Aorta (tissue), 5 donors: ENCODE measurements at regions of chr16 and their contacts with region 1.

Region 1: GRCh38 chr16:30571695-30572600 is at the start of gene ZNF688:
- DNase-seq: peak; percentile 97 to 98
- ATAC-seq: peak; percentile 95
- H3K4me3 ChIP-seq: peak within 1 kb of the TSS; percentile 16 to 85
- H3K27ac ChIP-seq: peak within 1 kb of the TSS; percentile 65 to 73
- H3K4me1 ChIP-seq: no peaks in the 10 kb centered on the region
- H3K27me3 ChIP-seq: no peaks in the 10 kb centered on the region
- total RNA-seq, gene ZNF688: 9.0 to 12.9 TPM

Region 2: GRCh38 chr16:30472328-30472942 is 99.5 kb before region 1 on chr16 and contains the start of gene ITGAL:
- intact Hi-C with region 1: no loop called
- DNase-seq: peak; percentile 74 to 81
- ATAC-seq: peak; percentile 62
- H3K4me3 ChIP-seq: no peak within 1 kb of the TSS
- H3K27ac ChIP-seq: no peak within 1 kb of the TSS
- H3K4me1 ChIP-seq: no peaks in the 10 kb centered on the region
- H3K27me3 ChIP-seq: no peaks in the 10 kb centered on the region
- total RNA-seq, gene ITGAL: 7.9 to 13.8 TPM

Region 3: GRCh38 chr16:30557957-30558788 is 13.8 kb before region 1 on chr16 and contains the start of gene ZNF764:
- intact Hi-C with region 1: loop called in 1 of 2 experiments (anchors 1 kb)
- DNase-seq: peak; percentile 98 to 99
- ATAC-seq: peak; percentile 98
- H3K4me3 ChIP-seq: peak within 1 kb of the TSS; percentile 39 to 63
- H3K27ac ChIP-seq: peak within 1 kb of the TSS in 1 of 2 donors; percentile 53
- H3K4me1 ChIP-seq: no peaks in the 10 kb centered on the region
- H3K27me3 ChIP-seq: no peaks in the 10 kb centered on the region
- total RNA-seq, gene ZNF764: 6.4 to 8.5 TPM

Region 4: DNA sequence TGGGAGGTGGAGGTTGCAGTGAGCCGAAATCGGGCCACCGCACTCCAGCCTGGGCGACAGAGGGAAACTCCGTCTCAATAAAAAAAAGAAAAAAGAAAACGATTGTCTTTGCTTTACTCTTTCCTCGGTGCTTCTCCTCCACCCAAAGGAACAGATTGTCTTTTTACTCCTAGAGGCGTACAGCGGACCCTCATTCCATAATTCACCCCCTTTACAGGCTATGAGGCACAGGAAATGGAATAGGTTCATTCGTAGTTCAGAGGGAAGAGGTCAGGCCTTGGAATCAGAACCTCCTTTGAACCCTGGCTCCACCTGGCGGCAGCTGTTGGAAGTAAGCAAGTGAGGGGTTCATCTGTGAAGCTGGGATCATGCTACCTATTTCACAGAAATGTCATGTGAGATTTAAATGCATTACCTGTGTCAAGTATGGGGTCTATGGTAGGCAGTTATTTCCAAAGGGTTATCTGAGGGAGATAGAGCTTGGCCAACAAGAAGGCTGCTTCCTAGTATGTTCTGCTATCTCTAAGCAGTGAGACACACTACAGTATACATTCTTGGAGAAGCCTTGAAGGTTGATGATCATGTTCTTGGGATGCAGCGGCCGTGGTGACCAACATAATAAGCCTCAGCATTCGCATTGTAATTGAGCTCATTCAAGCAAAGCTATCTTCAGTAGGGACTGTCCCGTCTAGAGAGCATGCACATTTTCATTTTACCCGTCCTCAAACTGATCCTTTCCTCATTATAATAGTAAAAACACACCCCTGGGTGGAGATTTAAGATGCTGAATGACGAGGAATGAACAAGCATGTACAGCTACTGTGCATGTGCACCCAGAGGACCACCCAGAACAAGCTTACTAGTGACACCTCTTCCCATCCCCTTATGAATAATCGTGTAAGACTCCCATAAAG is 56.9 kb after region 1 on chr16:
- intact Hi-C with region 1: no loop called
- DNase-seq: peak; percentile 88 to 95
- ATAC-seq: peak; percentile 91
- H3K4me3 ChIP-seq: no peak overlapping the region
- H3K27ac ChIP-seq: no peak overlapping the region
- H3K4me1 ChIP-seq: no peaks in the 10 kb centered on the region
- H3K27me3 ChIP-seq: no peaks in the 10 kb centered on the region

Region 5: GRCh38 chr16:30650369-30651123 is 78.6 kb after region 1 on chr16 and contains the start of gene PRR14:
- intact Hi-C with region 1: loop called in 1 of 2 experiments (anchors 5 kb)
- DNase-seq: peak; percentile 100
- ATAC-seq: peak; percentile 96
- H3K4me3 ChIP-seq: peak within 1 kb of the TSS; percentile 24 to 82
- H3K27ac ChIP-seq: peak within 1 kb of the TSS; percentile 58 to 88
- H3K4me1 ChIP-seq: no peaks in the 10 kb centered on the region
- H3K27me3 ChIP-seq: no peaks in the 10 kb centered on the region
- total RNA-seq, gene PRR14: 50.5 to 53.4 TPM